ENCODE measurements at regions of chr12 and their contacts with region 1.

Region 1: GRCh38 chr12:452667-453210 is 7.0 kb upstream of the B4GALNT3 start:
- DNase-seq: no peak
- ATAC-seq: no peak
- H3K4me3 ChIP-seq: no peak overlapping the region
- H3K27ac ChIP-seq: no peak overlapping the region
- H3K4me1 ChIP-seq: no peaks in the 10 kb centered on the region
- H3K27me3 ChIP-seq: peaks cover 0 to under 1% (median 0%) of the 10 kb centered on the region in 3 donors
- CTCF ChIP-seq: peak in 2 of 5 experiments; percentile 27 to 32
- POLR2A ChIP-seq: no peak

Region 2: GRCh38 chr12:538731-539539 is 86.2 kb after region 1 on chr12:
- in situ Hi-C with region 1: loop called in 3 of 4 experiments (anchors 5 to 10 kb)
- intact Hi-C with region 1: loop called (anchors 2 kb)
- DNase-seq: no peak
- ATAC-seq: no peak
- H3K4me3 ChIP-seq: no peak overlapping the region
- H3K27ac ChIP-seq: no peak overlapping the region
- H3K4me1 ChIP-seq: no peaks in the 10 kb centered on the region
- H3K27me3 ChIP-seq: no peaks in the 10 kb centered on the region
- CTCF ChIP-seq: no peak
- POLR2A ChIP-seq: no peak

Region 3: DNA sequence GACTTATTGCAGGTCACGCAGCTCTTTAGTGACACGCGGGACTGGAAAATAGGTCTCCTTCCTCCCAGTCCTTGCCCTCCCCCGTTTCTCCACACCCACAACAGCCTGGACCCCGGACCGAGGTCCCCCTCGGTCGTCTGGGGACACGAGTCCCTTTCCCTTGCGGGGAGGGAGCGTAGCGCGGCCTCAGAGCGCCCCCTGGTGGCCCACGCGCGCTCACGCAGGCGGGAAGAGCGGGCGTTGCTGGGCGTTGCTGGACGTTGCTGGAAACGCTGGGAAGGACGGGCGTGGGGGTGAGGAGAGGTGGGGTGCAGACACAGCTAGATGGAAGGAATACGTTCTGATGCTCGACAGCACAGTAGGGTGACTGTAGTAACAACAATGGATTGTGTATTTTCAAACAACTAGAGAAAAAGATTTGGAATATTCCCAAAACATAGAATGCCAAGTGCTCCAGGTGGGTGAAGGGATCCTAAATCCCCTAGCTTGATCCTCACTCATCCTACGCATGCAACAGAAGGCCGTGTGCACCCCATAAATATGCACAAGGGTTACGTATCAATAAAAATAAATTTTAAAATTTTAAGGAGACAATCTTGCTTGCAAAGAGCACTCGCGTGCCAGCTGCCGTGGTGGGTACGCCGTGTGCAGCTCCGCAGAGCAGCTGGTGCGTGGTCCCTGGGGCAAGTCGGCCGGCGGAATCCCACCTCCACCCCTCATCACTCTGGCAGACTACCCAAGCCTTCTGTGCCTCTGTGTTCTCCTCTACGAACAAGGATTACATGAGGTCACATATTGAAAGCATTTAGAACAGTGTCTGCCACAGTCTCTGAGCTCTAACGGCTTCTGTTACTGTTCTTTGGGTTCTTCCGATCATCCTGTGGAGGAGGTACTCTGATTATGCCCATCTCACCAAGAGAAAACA is 94.4 kb after region 1 on chr12:
- in situ Hi-C with region 1: loop called in 3 of 4 experiments (anchors 5 kb)
- intact Hi-C with region 1: loop called (anchors 1 kb)
- DNase-seq: no peak
- ATAC-seq: peak; percentile 40 to 68
- H3K4me3 ChIP-seq: peak overlapping the region in 1 of 4 donors; percentile 2
- H3K27ac ChIP-seq: no peak overlapping the region
- H3K4me1 ChIP-seq: peaks cover 0 to 10% of the 10 kb centered on the region in 2 donors
- H3K27me3 ChIP-seq: peaks cover 0 to 6% (median 5%) of the 10 kb centered on the region in 3 donors
- CTCF ChIP-seq: peak; percentile 98 to 99 (median 99)
- POLR2A ChIP-seq: no peak

Region 4: GRCh38 chr12:553205-554000 is 100.7 kb after region 1 on chr12:
- in situ Hi-C with region 1: loop called in 2 of 4 experiments (anchors 5 kb)
- intact Hi-C with region 1: no loop called
- DNase-seq: no peak
- ATAC-seq: no peak
- H3K4me3 ChIP-seq: no peak overlapping the region
- H3K27ac ChIP-seq: no peak overlapping the region
- H3K4me1 ChIP-seq: peaks cover 13 to 16% of the 10 kb centered on the region in 2 donors
- H3K27me3 ChIP-seq: no peaks in the 10 kb centered on the region
- CTCF ChIP-seq: no peak
- POLR2A ChIP-seq: no peak

Region 5: DNA sequence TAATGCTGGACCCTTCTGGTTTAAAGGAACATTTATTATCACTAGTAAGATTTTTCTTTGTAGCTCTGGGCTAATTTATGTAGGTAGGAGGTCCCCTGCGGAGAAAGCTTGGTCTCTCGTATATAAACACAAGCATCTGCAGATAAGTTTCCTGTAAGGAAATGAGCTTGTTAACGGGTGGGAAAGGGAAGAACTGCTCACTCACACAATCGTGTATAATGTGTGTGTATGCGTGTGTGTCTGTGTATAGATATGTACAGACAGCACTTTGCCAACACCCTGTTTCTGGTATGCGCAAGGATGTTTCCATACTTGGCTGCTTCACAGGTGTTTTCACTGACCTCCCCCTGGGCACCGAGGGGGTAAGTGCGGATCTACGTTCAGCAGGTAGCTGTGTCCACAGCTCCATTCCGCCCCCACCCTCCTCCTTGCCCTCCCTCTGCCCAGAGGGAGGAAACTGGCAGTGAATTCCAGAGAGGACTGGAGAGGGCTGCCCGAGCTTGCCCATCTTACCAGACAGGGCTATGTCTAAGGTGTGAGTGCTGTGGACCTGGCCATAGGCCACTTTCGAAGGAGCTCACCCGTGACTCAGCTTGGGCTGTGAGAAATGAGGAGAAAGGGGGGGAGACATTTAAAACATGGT is 145.3 kb after region 1 on chr12:
- in situ Hi-C with region 1: no loop called
- intact Hi-C with region 1: no loop called
- DNase-seq: no peak
- ATAC-seq: peak; percentile 22 to 27
- H3K4me3 ChIP-seq: no peak overlapping the region
- H3K27ac ChIP-seq: peak overlapping the region in 1 of 4 donors; percentile 18
- H3K4me1 ChIP-seq: no peaks in the 10 kb centered on the region
- H3K27me3 ChIP-seq: no peaks in the 10 kb centered on the region
- CTCF ChIP-seq: no peak
- POLR2A ChIP-seq: no peak